ENCODE measurements at regions of chr1 and their contacts with region 1.

Region 1: GRCh38 chr1:167803358-167804207 is 81.8 kb downstream of the MPZL1 start:
- DNase-seq: peak; percentile 95
- ATAC-seq: peak; percentile 96
- H3K4me3 Mint-ChIP-seq: peak overlapping the region; percentile 54
- H3K27ac Mint-ChIP-seq: no peak overlapping the region; the same call in 1 of the 2 replicates
- H3K4me1 Mint-ChIP-seq: peaks cover 10% of the 10 kb centered on the region
- H3K27me3 Mint-ChIP-seq: no peaks in the 10 kb centered on the region; the same call in 1 of the 2 replicates
- CTCF ChIP-seq: peak; percentile 93

Region 2: DNA sequence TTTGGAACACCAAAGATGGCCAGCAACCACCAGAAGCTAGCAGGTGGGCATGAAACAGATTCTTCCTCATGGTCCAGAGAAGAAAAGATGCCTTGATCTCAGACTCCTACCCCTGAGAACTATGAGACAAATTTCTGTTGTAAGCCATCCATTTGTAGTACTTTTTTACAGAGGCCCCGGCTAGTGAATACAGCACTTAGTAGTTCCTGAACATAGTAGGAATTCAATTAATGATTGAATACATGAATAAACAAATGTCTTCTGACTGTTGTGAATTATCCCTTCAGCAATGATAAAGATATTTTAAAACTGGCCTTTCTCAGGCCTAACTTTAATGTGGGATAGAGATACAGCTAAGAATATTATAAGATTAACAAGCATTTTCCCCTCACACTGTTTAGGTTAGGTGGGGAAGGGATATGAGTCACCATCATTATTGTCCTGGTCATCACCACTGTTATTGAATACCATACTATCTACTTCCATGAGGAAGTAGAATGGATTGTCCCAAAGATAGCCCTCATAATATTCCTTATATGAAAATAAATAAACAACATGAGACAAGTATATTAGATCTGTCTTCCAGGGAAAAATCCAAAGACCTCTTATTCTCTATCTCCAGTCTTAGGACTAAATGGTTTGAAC is 59.0 kb after region 1 on chr1:
- CTCF ChIA-PET with region 1: interaction called, 10 read pairs
- POLR2A ChIA-PET with region 1: no interaction called
- DNase-seq: no peak
- ATAC-seq: no peak
- H3K4me3 Mint-ChIP-seq: no peak overlapping the region
- H3K27ac Mint-ChIP-seq: no peak overlapping the region
- H3K4me1 Mint-ChIP-seq: peaks cover 33% of the 10 kb centered on the region
- H3K27me3 Mint-ChIP-seq: peaks cover 21% of the 10 kb centered on the region
- CTCF ChIP-seq: no peak

Region 3: GRCh38 chr1:167936068-167936929 is 132.7 kb after region 1 on chr1 and contains the start of gene DCAF6:
- CTCF ChIA-PET with region 1: interaction called, 13 read pairs
- POLR2A ChIA-PET with region 1: no interaction called
- DNase-seq: peak; percentile 96
- ATAC-seq: peak; percentile 87
- H3K4me3 Mint-ChIP-seq: peak within 1 kb of the TSS; percentile 92
- H3K27ac Mint-ChIP-seq: peak within 1 kb of the TSS; percentile 100
- H3K4me1 Mint-ChIP-seq: peaks cover 21% of the 10 kb centered on the region
- H3K27me3 Mint-ChIP-seq: no peaks in the 10 kb centered on the region
- CTCF ChIP-seq: no peak
- total RNA-seq, gene DCAF6: 13.5 to 17.4 TPM (median 16.1 TPM) in 3 replicates